Endothelial cell of umbilical vein (primary cell): ENCODE measurements at regions of chr6 and their contacts with region 1.

Region 1: GRCh38 chr6:126824226-126824625 is 294.2 kb upstream of the RSPO3 start:
- DNase-seq: no peak
- H3K4me3 ChIP-seq: no peak overlapping the region
- H3K27ac ChIP-seq: no peak overlapping the region
- H3K4me1 ChIP-seq: peaks cover 19% of the 10 kb centered on the region
- H3K27me3 ChIP-seq: no peaks in the 10 kb centered on the region
- CTCF ChIP-seq: no peak
- POLR2A ChIP-seq: no peak

Region 2: GRCh38 chr6:126811321-126811720 is 12.9 kb before region 1 on chr6:
- CTCF ChIA-PET with region 1: interaction called, 17 read pairs
- POLR2A ChIA-PET with region 1: interaction called, 3 read pairs
- dilution Hi-C with region 1: no loop called
- intact Hi-C with region 1: no loop called
- DNase-seq: peak; percentile 85
- H3K4me3 ChIP-seq: no peak overlapping the region
- H3K27ac ChIP-seq: peak overlapping the region; percentile 79
- H3K4me1 ChIP-seq: peaks cover 27% of the 10 kb centered on the region
- H3K27me3 ChIP-seq: no peaks in the 10 kb centered on the region
- CTCF ChIP-seq: no peak
- POLR2A ChIP-seq: no peak